ENCODE measurements at regions of chr17 and their contacts with region 1.

Region 1: DNA sequence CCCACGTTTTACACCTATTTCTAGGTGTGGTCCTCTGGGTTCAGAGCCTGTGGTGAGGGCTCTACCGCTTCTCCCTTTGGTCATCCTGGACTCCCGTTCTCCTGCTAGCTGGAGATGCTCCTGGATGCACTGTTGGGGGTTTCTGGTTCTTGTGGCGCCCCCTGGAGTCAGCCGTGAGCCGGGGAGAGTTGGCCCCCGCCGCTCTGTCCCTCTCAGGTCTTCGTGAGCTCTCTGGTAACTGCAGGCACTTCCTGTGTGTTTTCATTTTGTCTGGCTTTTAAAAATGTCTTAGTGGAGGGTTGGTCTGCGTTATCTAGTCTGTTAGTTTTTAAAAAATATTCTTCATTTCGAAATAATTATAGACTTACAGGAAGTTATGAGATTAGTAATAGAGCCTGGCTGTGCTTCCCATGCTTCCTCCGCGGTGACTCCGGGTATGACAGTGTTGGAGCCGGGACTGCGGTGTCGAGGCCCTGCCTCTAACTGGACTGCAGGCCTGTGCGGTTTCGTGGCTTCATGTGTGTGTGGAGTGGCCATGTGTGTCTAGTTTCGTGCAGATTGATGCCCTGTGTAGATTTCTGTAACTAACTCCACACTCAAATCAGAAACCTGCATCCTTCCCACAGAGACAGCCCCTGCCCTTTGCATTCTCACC is 78.0 kb upstream of the ZNF750 start:
- DNase-seq: no peak
- ATAC-seq: no peak
- H3K4me3 ChIP-seq: no peak overlapping the region
- H3K4me3 Mint-ChIP-seq: no peak overlapping the region
- H3K27ac ChIP-seq: no peak overlapping the region
- H3K27ac Mint-ChIP-seq: no peak overlapping the region
- H3K4me1 ChIP-seq: peaks cover 23 to 24% of the 10 kb centered on the region in 2 donors
- H3K4me1 Mint-ChIP-seq: peaks cover 29% of the 10 kb centered on the region
- H3K27me3 ChIP-seq: no peaks in the 10 kb centered on the region
- H3K27me3 Mint-ChIP-seq: no peaks in the 10 kb centered on the region
- CTCF ChIP-seq: peak; percentile 10

Region 2: GRCh38 chr17:82823004-82823403 is 94.8 kb before region 1 on chr17:
- CTCF ChIA-PET with region 1: interaction called, 15 read pairs
- POLR2A ChIA-PET with region 1: no interaction called
- intact Hi-C with region 1: no loop called
- DNase-seq: no peak
- ATAC-seq: no peak
- H3K4me3 ChIP-seq: no peak overlapping the region
- H3K4me3 Mint-ChIP-seq: no peak overlapping the region
- H3K27ac ChIP-seq: no peak overlapping the region
- H3K27ac Mint-ChIP-seq: no peak overlapping the region
- H3K4me1 ChIP-seq: peaks cover 18 to 19% of the 10 kb centered on the region in 2 donors
- H3K4me1 Mint-ChIP-seq: peaks cover 24% of the 10 kb centered on the region
- H3K27me3 ChIP-seq: no peaks in the 10 kb centered on the region
- H3K27me3 Mint-ChIP-seq: no peaks in the 10 kb centered on the region
- CTCF ChIP-seq: peak; percentile 9

Region 3: GRCh38 chr17:83067221-83068048 is 149.6 kb after region 1 on chr17:
- CTCF ChIA-PET with region 1: no interaction called
- POLR2A ChIA-PET with region 1: no interaction called
- intact Hi-C with region 1: no loop called
- DNase-seq: no peak
- ATAC-seq: no peak
- H3K4me3 ChIP-seq: no peak overlapping the region
- H3K4me3 Mint-ChIP-seq: no peak overlapping the region
- H3K27ac ChIP-seq: no peak overlapping the region
- H3K27ac Mint-ChIP-seq: peak overlapping the region; percentile 26
- H3K4me1 ChIP-seq: peaks cover 0 to 5% of the 10 kb centered on the region in 2 donors
- H3K4me1 Mint-ChIP-seq: peaks cover 12% of the 10 kb centered on the region
- H3K27me3 ChIP-seq: peaks cover 0 to 11% (median 0%) of the 10 kb centered on the region in 4 experiments
- H3K27me3 Mint-ChIP-seq: peaks cover 4% of the 10 kb centered on the region
- CTCF ChIP-seq: no peak